Right lobe of liver (tissue), 6 donors: ENCODE measurements at regions of chr2 and their contacts with region 1.

Region 1: DNA sequence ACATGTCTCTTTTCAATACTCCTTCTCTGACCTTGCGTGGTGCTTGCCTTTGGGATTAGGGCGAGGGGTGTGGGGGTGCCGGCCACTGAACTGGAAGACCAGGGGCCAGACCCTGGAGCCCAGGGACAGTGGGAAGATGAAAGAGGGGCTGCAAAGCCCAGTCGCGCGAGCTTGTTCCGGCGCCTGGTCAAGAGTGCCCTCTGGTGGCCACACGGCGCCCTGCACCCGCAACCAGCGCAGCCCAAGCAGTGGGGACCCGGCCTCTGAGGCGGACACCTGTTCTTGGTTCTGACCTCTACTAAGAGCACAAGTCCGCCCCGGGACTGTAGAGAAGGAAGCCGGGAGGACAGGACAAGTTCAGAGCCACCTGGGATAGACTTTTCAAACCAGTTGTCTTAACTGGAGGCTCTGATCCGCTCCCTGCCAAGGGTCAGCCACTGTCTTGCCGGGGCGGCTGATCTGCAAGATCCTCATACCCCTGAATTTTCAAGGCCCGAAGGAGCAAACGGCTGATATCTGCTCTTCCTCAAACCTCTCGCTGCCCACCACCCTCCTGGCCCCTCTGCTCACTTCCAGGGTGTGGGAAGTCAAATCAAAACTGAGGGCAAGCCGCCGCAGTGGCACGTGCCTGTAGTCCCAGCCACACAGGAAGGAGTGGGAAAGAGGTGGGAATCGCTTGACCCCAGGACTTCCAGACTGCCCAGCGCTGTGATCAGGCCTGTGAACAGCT is 14.9 kb upstream of the MSH6 start:
- DNase-seq: peak; percentile 72 to 80 (median 76)
- ATAC-seq: peak; percentile 93 to 95 (median 94)
- H3K4me3 ChIP-seq: no peak overlapping the region
- H3K27ac ChIP-seq: no peak overlapping the region
- H3K4me1 ChIP-seq: peaks cover 0 to 5% (median 0%) of the 10 kb centered on the region in 4 donors
- H3K27me3 ChIP-seq: no peaks in the 10 kb centered on the region
- CTCF ChIP-seq: peak; percentile 94 to 99 (median 98)
- POLR2A ChIP-seq: no peak

Region 2: DNA sequence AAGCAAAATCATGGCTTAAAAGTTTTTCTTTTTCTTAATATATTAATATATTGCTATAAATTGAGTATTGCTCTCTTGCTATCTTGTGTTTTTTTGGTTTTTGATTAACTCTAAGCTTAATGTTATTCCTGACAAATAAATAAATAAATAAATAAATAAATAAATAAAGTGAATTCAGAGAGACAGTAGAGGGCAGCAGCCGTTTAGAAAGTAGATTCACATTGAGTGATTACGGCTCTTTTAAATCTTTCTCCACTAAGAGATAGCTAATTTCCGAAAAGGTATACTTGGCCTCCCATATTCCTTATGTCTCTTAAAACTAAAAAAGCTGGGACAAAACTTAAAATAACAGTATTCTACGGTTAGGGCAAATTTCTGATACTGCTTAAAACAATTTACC is 330.8 kb before region 1 on chr2:
- intact Hi-C with region 1: loop called in 1 of 2 experiments (anchors 5 kb)
- DNase-seq: no peak
- ATAC-seq: peak; percentile 73 to 80 (median 76)
- H3K4me3 ChIP-seq: no peak overlapping the region
- H3K27ac ChIP-seq: no peak overlapping the region
- H3K4me1 ChIP-seq: no peaks in the 10 kb centered on the region
- H3K27me3 ChIP-seq: no peaks in the 10 kb centered on the region
- CTCF ChIP-seq: peak; percentile 46 to 64 (median 58)
- POLR2A ChIP-seq: no peak

Region 3: DNA sequence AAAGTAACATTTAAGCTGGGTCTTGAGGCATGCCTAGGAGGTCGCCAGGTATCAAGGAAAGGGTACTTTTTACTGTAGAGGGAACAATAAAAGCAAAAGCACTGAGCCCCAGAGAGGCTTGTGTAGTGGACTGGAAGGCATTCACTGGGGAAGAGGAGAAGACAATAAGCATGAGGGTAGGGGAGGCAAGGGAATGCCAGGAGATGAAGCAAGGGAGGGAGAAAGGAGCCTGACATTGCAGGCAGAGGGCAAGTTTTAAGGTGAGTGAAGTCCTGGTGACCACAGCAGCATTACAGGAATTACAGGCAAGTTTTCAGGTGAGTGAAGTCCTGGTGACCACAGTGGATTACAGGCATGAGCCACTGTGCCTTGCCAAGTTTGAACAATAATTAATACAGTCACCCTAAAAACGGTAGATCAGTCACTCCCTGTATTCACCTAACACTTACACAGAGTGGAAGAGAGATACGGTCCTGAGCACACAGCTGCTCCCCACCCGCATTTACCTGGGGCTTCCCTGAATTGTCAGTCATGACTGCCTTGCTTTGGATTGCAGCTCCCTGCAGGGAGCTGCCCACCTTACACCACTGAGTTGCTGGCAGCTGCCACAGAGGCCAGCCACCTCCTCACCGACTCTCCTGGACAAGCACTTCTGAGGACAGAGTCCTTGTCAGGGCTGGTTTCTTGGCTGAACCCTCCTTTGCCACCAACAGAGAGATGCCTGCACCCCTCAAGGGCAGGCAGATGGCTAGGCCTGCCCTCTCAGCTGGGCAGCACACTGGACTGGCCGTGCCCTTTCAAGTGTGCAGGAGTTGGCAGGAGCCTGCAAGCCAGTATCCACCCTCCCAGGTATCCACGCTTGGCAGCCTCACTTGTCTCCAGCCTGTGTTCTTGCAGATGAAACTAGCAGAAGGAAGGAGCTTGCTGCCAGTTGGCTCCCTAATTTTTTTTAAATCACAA is 138.3 kb before region 1 on chr2:
- intact Hi-C with region 1: no loop called
- DNase-seq: no peak
- ATAC-seq: peak in 1 of 4 donors; percentile 9
- H3K4me3 ChIP-seq: no peak overlapping the region
- H3K27ac ChIP-seq: no peak overlapping the region
- H3K4me1 ChIP-seq: no peaks in the 10 kb centered on the region
- H3K27me3 ChIP-seq: no peaks in the 10 kb centered on the region
- CTCF ChIP-seq: no peak
- POLR2A ChIP-seq: no peak